Activated CD4-positive, alpha-beta T cell treated with anti-CD3 and anti-CD28 coated beads, Interleukin-2, amount 10 ng/mL, durations not matched to agents 24 days and 14 days (primary cell): ENCODE measurements at regions of chr5 and their contacts with region 1.

Region 1: DNA sequence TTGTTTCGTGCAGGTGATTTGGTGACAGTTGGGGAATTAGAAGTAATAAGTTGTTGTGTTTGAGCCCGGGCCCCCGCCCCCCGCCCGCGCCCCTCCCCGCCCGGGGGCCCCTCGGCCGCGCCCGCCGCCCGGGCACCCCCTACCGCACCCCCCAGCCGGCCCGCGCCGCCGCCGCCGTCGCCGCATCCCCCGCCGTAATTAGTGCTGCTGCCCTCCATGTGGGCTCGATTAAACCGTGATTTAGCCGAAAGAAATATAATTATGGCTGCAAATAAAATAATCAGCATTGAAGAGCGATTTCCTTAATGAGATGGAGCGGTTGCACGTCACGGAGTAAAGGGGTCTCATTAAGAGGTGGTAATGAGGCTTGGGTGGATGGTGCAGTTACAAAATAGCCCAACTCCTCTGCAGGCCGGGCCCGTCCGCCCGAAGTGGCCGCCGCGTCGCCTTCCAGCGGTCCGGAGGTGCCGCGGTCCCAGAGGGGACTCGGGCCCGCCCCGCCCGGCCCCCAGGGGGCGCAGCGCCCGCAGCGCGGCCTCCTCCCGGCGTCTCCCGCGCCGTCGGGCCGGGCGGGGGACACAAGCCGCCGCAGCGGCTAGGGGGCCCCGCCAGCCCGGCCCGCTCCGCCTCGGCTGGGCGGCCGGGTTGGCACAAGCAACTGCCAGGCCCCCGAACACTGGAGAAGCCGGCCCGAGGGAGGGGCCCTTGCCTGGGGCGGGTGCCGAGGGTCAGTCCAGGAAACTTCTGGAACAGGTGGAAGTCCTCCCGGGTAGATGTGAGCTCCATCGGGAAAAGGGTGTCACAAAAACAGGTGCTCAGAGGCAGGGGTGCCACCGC is 6.9 kb upstream of the OTP start:
- DNase-seq: peak; percentile 80
- H3K4me3 Mint-ChIP-seq: peak overlapping the region; percentile 36
- H3K27ac Mint-ChIP-seq: no peak overlapping the region
- H3K4me1 Mint-ChIP-seq: peaks cover 10% of the 10 kb centered on the region
- H3K27me3 Mint-ChIP-seq: peaks cover 85% of the 10 kb centered on the region

Region 2: DNA sequence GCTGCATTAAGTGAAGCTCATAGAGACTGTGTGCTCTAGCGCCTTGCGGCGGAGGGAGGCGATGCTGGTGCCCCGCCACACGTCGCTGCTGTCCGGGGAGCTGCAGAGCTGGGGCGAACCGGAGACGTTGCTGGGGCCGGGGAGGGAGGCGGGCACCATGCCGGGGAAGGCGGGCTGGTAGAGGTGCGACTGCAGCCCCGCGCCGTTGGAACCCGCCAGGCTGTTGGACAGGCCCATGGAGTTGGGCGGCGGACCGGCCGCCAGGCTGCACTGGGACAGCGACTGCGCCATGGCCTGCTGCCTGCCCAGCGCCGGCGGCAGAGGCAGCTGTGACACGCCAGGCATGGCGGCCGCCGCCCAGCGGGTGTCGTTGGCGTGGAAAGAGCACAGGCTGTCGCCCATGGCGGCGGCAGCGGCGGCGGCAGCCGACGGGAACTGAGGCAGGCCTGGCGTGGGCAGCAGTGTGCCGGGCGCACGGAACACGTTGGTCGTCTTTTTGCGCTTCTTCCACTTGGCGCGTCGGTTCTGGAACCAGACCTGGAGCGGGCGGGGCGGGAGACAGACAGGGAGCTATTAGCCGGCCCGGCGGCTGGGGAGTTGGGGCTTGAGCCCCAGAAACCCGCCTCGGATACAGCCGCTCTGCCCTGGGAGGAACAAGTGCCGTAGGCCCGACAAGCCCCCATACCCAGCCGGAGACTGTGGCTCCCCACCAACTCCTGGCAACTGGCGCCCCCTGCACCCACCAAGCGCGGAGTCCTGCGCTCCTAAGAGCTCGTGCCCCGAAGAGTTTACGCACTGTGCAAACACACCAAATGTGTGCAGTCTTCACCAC is 14.9 kb before region 1 on chr5:
- intact Hi-C with region 1: loop called (anchors 1 kb)
- DNase-seq: peak; percentile 79
- H3K4me3 Mint-ChIP-seq: peak overlapping the region; percentile 78
- H3K27ac Mint-ChIP-seq: peak overlapping the region; percentile 34
- H3K4me1 Mint-ChIP-seq: peaks cover 14% of the 10 kb centered on the region
- H3K27me3 Mint-ChIP-seq: peaks cover 70% of the 10 kb centered on the region

Region 3: GRCh38 chr5:77775790-77776553 is 130.6 kb after region 1 on chr5 and contains the start of gene TBCA:
- intact Hi-C with region 1: loop called (anchors 5 kb)
- DNase-seq: peak; percentile 98
- H3K4me3 Mint-ChIP-seq: peak within 1 kb of the TSS; percentile 96
- H3K27ac Mint-ChIP-seq: peak within 1 kb of the TSS; percentile 98
- H3K4me1 Mint-ChIP-seq: peaks cover 41% of the 10 kb centered on the region
- H3K27me3 Mint-ChIP-seq: no peaks in the 10 kb centered on the region
- total RNA-seq, gene TBCA: 199 and 207 TPM in 2 replicates

Region 4: GRCh38 chr5:77843570-77844372 is 198.4 kb after region 1 on chr5:
- intact Hi-C with region 1: loop called (anchors 2 kb)
- DNase-seq: no peak
- H3K4me3 Mint-ChIP-seq: peak overlapping the region; percentile 44
- H3K27ac Mint-ChIP-seq: no peak overlapping the region
- H3K4me1 Mint-ChIP-seq: peaks cover 5% of the 10 kb centered on the region
- H3K27me3 Mint-ChIP-seq: peaks cover 77% of the 10 kb centered on the region

Region 5: GRCh38 chr5:77972469-77973252 is 327.3 kb after region 1 on chr5:
- intact Hi-C with region 1: loop called (anchors 2 kb)
- DNase-seq: peak; percentile 61
- H3K4me3 Mint-ChIP-seq: peak overlapping the region; percentile 67
- H3K27ac Mint-ChIP-seq: no peak overlapping the region
- H3K4me1 Mint-ChIP-seq: peaks cover 7% of the 10 kb centered on the region
- H3K27me3 Mint-ChIP-seq: peaks cover 62% of the 10 kb centered on the region

Region 6: GRCh38 chr5:78269088-78269703 is 623.8 kb after region 1 on chr5:
- intact Hi-C with region 1: loop called (anchors 10 kb)
- DNase-seq: no peak
- H3K4me3 Mint-ChIP-seq: no peak overlapping the region
- H3K27ac Mint-ChIP-seq: no peak overlapping the region
- H3K4me1 Mint-ChIP-seq: peaks cover 7% of the 10 kb centered on the region
- H3K27me3 Mint-ChIP-seq: no peaks in the 10 kb centered on the region

Region 7: GRCh38 chr5:78294248-78295034 is 649.1 kb after region 1 on chr5 and contains the start of gene AP3B1:
- intact Hi-C with region 1: loop called (anchors 10 kb)
- DNase-seq: peak; percentile 99
- H3K4me3 Mint-ChIP-seq: peak within 1 kb of the TSS; percentile 88
- H3K27ac Mint-ChIP-seq: peak within 1 kb of the TSS; percentile 97
- H3K4me1 Mint-ChIP-seq: peaks cover 26% of the 10 kb centered on the region
- H3K27me3 Mint-ChIP-seq: peaks cover 10% of the 10 kb centered on the region
- total RNA-seq, gene AP3B1: 40.1 and 45.5 TPM in 2 replicates